Activated CD4-positive, alpha-beta T cell treated with anti-CD3 and anti-CD28 coated beads for 36 hours (primary cell): ENCODE measurements at regions of chr5 and their contacts with region 1.

Region 1: GRCh38 chr5:90474235-90475109 is at the starts of genes MBLAC2 and POLR3G:
- DNase-seq: peak; percentile 97
- ATAC-seq: peak; percentile 91
- H3K4me3 Mint-ChIP-seq: peak within 1 kb of the TSS; percentile 95
- H3K27ac Mint-ChIP-seq: peak within 1 kb of the TSS; percentile 89
- H3K4me1 Mint-ChIP-seq: peaks cover 36% of the 10 kb centered on the region
- H3K27me3 Mint-ChIP-seq: no peaks in the 10 kb centered on the region
- total RNA-seq, gene MBLAC2: 4.6 to 5.1 TPM
- total RNA-seq, gene POLR3G: 18.4 to 22.7 TPM

Region 2: GRCh38 chr5:90409318-90410177 is 64.9 kb before region 1 on chr5 and contains the start of gene CETN3:
- CTCF ChIA-PET with region 1: interaction called, 7 read pairs
- POLR2A ChIA-PET with region 1: interaction called, 5 read pairs
- intact Hi-C with region 1: loop called (anchors 1 kb)
- DNase-seq: peak; percentile 94
- ATAC-seq: peak; percentile 96
- H3K4me3 Mint-ChIP-seq: no peak within 1 kb of the TSS
- H3K27ac Mint-ChIP-seq: no peak within 1 kb of the TSS
- H3K4me1 Mint-ChIP-seq: peaks cover 23% of the 10 kb centered on the region
- H3K27me3 Mint-ChIP-seq: no peaks in the 10 kb centered on the region
- total RNA-seq, gene CETN3: 52.8 to 53.5 TPM

Region 3: DNA sequence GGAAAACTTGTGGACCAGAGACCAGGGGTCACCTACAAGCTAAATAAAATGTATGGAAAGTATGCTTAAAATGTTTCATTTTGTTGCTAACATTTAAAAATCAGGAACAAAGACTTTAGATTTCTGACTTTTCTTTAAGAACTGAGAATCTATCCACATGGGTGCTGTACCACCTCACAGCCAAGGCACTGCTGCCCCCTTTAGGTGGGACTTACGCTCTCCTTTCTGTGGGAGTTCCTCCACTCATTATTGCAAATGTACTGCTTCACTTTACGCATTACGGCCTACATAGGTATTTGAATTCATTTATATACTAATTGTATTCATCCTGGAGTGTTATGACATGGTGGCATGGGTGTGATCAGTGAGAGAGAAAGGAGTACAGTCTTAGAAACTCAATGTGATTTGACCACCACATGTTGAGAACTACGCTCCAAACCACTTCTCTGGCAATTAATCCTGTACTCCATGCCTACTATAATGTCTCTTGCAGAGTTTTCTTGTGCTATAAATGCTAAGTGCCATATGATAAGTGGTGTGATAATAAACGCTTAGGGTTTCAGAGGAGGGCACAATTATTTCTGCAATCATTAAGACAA is 40.3 kb before region 1 on chr5:
- CTCF ChIA-PET with region 1: interaction called, 16 read pairs
- POLR2A ChIA-PET with region 1: no interaction called
- intact Hi-C with region 1: no loop called
- DNase-seq: peak; percentile 71
- ATAC-seq: peak; percentile 63
- H3K4me3 Mint-ChIP-seq: no peak overlapping the region
- H3K27ac Mint-ChIP-seq: no peak overlapping the region
- H3K4me1 Mint-ChIP-seq: no peaks in the 10 kb centered on the region
- H3K27me3 Mint-ChIP-seq: peaks cover 3% of the 10 kb centered on the region

Region 4: DNA sequence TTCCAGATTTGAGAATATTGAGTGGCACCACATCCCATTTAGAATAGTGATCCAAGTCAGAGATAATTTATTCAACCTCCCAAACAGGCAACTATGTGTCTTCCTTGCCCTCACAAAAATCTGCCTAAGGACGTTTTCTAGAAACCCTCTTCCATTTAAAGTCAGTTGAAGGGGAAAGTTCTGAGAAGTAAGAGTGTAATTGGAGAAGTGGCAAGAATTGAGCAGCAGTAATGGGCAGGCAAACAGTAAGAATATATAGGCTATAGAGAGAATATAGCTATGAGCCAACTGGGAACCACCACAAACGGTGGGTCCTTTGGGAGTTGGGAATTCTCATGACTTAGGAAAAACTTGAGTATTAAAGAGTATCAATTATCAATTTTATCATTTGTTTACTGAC is 33.8 kb before region 1 on chr5:
- CTCF ChIA-PET with region 1: interaction called, 16 read pairs
- POLR2A ChIA-PET with region 1: no interaction called
- intact Hi-C with region 1: loop called in 1 of 2 experiments (anchors 1 kb)
- DNase-seq: no peak
- ATAC-seq: no peak
- H3K4me3 Mint-ChIP-seq: peak overlapping the region; percentile 51
- H3K27ac Mint-ChIP-seq: no peak overlapping the region
- H3K4me1 Mint-ChIP-seq: peaks cover 4% of the 10 kb centered on the region
- H3K27me3 Mint-ChIP-seq: peaks cover 5% of the 10 kb centered on the region

Region 5: GRCh38 chr5:90529194-90529938 is 54.9 kb after region 1 on chr5 and contains the start of gene LYSMD3:
- CTCF ChIA-PET with region 1: interaction called, 3 read pairs
- POLR2A ChIA-PET with region 1: interaction called, 3 read pairs
- intact Hi-C with region 1: loop called (anchors 1 kb)
- DNase-seq: peak; percentile 97
- ATAC-seq: peak; percentile 94
- H3K4me3 Mint-ChIP-seq: peak within 1 kb of the TSS; percentile 85
- H3K27ac Mint-ChIP-seq: peak within 1 kb of the TSS; percentile 95
- H3K4me1 Mint-ChIP-seq: peaks cover 27% of the 10 kb centered on the region
- H3K27me3 Mint-ChIP-seq: peaks cover 7% of the 10 kb centered on the region
- total RNA-seq, gene LYSMD3: 11.6 to 12.5 TPM